Activated CD4-positive, alpha-beta T cell treated with anti-CD3 and anti-CD28 coated beads for 36 hours (primary cell): ENCODE measurements at regions of chr3 and their contacts with region 1.

Region 1: GRCh38 chr3:52238761-52239701 is at the start of gene TWF2:
- DNase-seq: peak; percentile 92
- ATAC-seq: peak; percentile 67
- H3K4me3 Mint-ChIP-seq: peak within 1 kb of the TSS; percentile 99
- H3K27ac Mint-ChIP-seq: peak within 1 kb of the TSS; percentile 99
- H3K4me1 Mint-ChIP-seq: peaks cover 70% of the 10 kb centered on the region
- H3K27me3 Mint-ChIP-seq: no peaks in the 10 kb centered on the region
- total RNA-seq, gene TWF2: 85.0 to 93.5 TPM

Region 2: GRCh38 chr3:52197842-52198668 is 41.0 kb before region 1 on chr3 and contains the start of gene ALAS1:
- CTCF ChIA-PET with region 1: no interaction called
- POLR2A ChIA-PET with region 1: no interaction called
- intact Hi-C with region 1: loop called in 1 of 2 experiments (anchors 1 kb)
- DNase-seq: peak; percentile 97
- ATAC-seq: peak; percentile 95
- H3K4me3 Mint-ChIP-seq: peak within 1 kb of the TSS; percentile 96
- H3K27ac Mint-ChIP-seq: peak within 1 kb of the TSS; percentile 91
- H3K4me1 Mint-ChIP-seq: peaks cover 48% of the 10 kb centered on the region
- H3K27me3 Mint-ChIP-seq: no peaks in the 10 kb centered on the region
- total RNA-seq, gene ALAS1: 52.8 to 68.7 TPM

Region 3: DNA sequence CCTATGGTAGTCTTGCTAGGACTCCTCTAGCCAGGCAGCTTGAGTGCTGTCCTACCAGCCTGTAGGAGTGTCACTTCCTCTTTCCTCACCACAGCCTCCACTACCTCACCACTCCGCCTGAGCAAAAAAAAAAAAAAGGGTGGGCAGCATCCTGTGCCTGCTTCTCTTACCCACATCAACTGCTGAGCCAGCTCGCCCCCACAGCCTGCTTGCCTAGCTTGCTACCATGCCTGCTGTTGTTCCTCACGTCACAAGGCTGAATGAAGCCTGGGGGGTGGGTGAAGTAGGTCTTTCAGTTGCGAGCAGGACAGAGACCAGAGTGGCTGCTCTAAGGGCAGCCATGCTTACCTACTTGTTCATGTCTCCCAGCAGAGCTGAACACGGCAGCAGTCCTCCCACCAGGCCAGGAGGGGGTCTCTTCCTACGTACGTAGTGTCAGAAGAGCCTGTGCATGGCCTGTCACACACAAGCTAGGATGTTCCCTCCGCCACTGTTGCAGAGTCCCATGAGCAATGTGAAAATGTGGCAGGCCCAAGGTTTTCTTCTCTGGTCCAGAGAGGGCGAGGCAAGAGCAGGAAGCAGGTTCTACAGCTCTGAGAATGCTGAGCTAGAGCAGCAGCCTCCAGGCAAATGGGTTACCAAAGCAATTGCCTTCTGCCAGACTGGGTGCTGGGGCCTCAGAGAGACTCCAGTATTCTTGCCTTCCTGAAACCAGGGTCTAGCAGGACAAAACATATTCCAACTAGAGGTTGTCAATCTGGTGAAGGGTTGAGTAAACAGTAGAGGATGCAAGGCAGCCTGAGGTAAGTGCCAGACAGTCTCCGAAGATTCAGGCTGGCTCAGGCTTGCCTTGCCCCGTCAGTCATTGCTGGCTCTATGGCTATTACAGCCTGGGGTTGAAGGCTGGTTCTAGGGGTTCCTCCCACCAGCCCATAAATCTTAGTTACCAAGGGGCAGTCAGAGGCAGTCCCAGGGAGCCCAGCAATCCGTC is 14.6 kb after region 1 on chr3:
- CTCF ChIA-PET with region 1: interaction called, 14 read pairs
- POLR2A ChIA-PET with region 1: interaction called, 9 read pairs
- intact Hi-C with region 1: loop called (anchors 1 kb)
- DNase-seq: peak; percentile 92
- ATAC-seq: peak; percentile 89
- H3K4me3 Mint-ChIP-seq: peak overlapping the region; percentile 64
- H3K27ac Mint-ChIP-seq: peak overlapping the region; percentile 99
- H3K4me1 Mint-ChIP-seq: peaks cover 82% of the 10 kb centered on the region
- H3K27me3 Mint-ChIP-seq: no peaks in the 10 kb centered on the region

Region 4: DNA sequence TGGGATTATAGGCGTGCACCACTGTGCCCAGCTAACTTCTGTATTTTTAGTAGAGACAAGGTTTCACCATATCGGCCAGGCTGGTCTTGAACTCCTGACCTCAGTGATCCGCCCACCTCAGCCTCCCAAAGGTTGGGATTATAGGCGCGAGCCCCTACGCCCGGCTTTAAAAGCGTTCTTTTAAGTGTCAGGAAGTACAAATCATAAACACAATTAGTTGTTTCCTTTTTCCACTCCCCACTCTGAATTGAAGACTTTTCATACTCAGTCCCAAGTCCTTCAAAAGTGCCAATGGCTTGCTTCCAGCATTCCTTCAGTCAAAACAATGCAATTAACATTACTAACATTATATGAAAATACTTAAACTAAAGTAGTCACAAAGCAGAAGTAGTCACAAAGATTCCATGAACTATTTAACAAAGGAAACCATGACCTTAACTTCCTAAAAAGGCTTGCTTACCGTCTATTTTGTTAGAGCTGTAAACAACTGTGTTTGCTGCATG is 31.3 kb after region 1 on chr3:
- CTCF ChIA-PET with region 1: interaction called, 7 read pairs
- POLR2A ChIA-PET with region 1: interaction called, 5 read pairs
- intact Hi-C with region 1: loop called (anchors 1 kb)
- DNase-seq: no peak
- ATAC-seq: no peak
- H3K4me3 Mint-ChIP-seq: peak overlapping the region; percentile 99
- H3K27ac Mint-ChIP-seq: peak overlapping the region; percentile 93
- H3K4me1 Mint-ChIP-seq: peaks cover 85% of the 10 kb centered on the region
- H3K27me3 Mint-ChIP-seq: no peaks in the 10 kb centered on the region

Region 5: GRCh38 chr3:52291508-52292181 is 52.6 kb after region 1 on chr3:
- CTCF ChIA-PET with region 1: interaction called, 3 read pairs
- POLR2A ChIA-PET with region 1: interaction called, 9 read pairs
- intact Hi-C with region 1: loop called in 1 of 2 experiments (anchors 1 kb)
- DNase-seq: peak; percentile 66
- ATAC-seq: no peak
- H3K4me3 Mint-ChIP-seq: no peak overlapping the region
- H3K27ac Mint-ChIP-seq: no peak overlapping the region
- H3K4me1 Mint-ChIP-seq: peaks cover 16% of the 10 kb centered on the region
- H3K27me3 Mint-ChIP-seq: no peaks in the 10 kb centered on the region

Region 6: GRCh38 chr3:52455283-52456168 is 216.5 kb after region 1 on chr3 and contains the start of gene NISCH:
- CTCF ChIA-PET with region 1: no interaction called
- POLR2A ChIA-PET with region 1: no interaction called
- intact Hi-C with region 1: no loop called
- DNase-seq: peak; percentile 98
- ATAC-seq: peak; percentile 88
- H3K4me3 Mint-ChIP-seq: peak within 1 kb of the TSS; percentile 96
- H3K27ac Mint-ChIP-seq: peak within 1 kb of the TSS; percentile 95
- H3K4me1 Mint-ChIP-seq: peaks cover 36% of the 10 kb centered on the region
- H3K27me3 Mint-ChIP-seq: no peaks in the 10 kb centered on the region
- total RNA-seq, gene NISCH: 61.4 to 68.9 TPM

Region 7: DNA sequence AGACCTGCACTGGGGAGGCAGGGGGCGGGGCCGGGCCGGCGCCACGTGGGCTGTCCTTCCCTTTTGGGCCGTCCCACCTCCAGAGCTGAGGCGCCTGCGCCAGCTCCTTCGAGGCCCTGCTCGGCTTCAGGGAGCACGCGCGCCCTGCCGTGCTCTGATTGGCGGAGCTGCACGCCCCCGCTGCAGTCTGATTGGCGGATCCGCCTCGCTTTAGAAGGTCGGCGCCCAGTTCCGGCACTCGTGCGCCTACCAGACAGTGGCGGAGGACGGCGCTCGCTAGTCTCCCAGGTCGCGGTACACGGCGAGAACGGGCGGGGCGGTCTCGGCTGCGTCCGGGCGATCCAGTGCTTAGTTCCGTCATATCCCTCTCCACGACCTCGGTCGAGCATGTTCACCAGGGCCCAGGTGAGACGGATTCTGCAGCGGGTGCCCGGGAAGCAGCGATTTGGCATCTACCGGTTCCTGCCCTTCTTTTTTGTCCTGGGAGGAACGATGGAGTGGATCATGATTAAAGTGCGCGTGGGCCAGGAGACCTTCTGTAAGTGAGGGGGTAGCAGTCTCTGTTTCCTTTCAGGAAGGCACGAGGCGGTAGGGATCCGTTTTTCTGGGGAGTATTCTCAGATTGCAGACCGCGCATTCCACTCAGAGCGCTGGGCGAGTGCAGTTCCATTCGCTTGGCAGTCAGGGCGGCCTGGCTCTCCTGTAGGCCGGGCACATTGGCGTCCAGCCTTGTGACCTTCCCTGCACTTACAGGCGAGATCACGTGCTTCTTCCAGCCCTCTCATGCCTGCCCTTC is 297.5 kb after region 1 on chr3 and contains the start of gene UQCC5:
- CTCF ChIA-PET with region 1: no interaction called
- POLR2A ChIA-PET with region 1: interaction called, 3 read pairs
- intact Hi-C with region 1: loop called in 1 of 2 experiments (anchors 1 kb)
- DNase-seq: peak; percentile 99
- ATAC-seq: peak; percentile 91
- H3K4me3 Mint-ChIP-seq: peak within 1 kb of the TSS; percentile 100
- H3K27ac Mint-ChIP-seq: peak within 1 kb of the TSS; percentile 99
- H3K4me1 Mint-ChIP-seq: peaks cover 49% of the 10 kb centered on the region
- H3K27me3 Mint-ChIP-seq: no peaks in the 10 kb centered on the region
- total RNA-seq, gene UQCC5: 12.0 to 12.7 TPM